K562 (cell line): ENCODE measurements at regions of chr12 and their contacts with region 1.

Region 1: GRCh38 chr12:111248236-111249017 is 120.5 kb downstream of the PHETA1 start:
- DNase-seq: peak in 1 of 4 experiments; percentile 14
- ATAC-seq: 0 out of 3 replicates have a peak, but pooled peaks have one; percentile 27
- H3K4me3 ChIP-seq: no peak overlapping the region
- H3K27ac ChIP-seq: no peak overlapping the region
- H3K4me1 ChIP-seq: no peaks in the 10 kb centered on the region
- H3K27me3 ChIP-seq: peaks cover 19 to 70% of the 10 kb centered on the region in 2 experiments
- CTCF ChIP-seq: no peak
- EP300 ChIP-seq: no peak
- POLR2A ChIP-seq: no peak
- RAD21 ChIP-seq: no peak

Region 2: DNA sequence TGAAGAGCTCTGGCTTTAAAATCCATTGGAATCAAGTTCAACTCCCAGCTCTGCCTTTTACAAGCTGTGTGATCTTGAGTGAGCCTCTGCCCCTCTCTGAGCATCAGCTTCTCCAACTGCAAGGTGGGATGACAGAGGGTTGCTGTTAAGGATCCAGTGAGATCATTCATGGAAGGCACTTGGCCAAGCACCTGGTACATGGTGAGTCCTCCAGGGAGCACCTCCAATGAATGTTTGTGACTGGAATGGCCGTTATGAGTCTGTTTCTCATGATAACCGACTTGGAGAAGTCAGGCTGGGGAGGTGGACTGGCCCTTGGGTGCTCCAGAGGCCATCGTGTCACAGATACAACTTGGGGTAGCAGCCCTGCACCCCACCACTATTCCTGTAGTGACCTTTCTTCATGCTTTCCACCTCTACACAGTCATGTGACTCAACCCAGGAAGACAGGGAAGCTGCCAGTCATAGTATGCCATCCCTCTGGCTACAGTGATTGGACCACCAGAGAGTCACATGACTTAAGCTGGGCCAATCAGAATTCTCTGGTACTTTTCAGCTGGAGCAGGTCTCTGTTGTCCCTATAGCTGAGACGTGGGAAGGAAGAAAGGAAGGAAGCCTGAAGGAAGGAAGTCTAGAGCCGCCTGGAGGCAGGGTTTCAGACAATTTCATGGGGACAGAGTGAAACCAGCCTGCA is 181.5 kb before region 1 on chr12:
- CTCF ChIA-PET with region 1: no interaction called
- POLR2A ChIA-PET with region 1: no interaction called
- in situ Hi-C with region 1: no loop called
- intact Hi-C with region 1: loop called (anchors 10 kb)
- DNase-seq: peak; percentile 28 to 71 (median 64)
- ATAC-seq: peak; percentile 82
- H3K4me3 ChIP-seq: no peak overlapping the region
- H3K27ac ChIP-seq: no peak overlapping the region
- H3K4me1 ChIP-seq: no peaks in the 10 kb centered on the region
- H3K27me3 ChIP-seq: peaks cover 12 to 40% of the 10 kb centered on the region in 2 experiments
- CTCF ChIP-seq: no peak
- EP300 ChIP-seq: no peak
- POLR2A ChIP-seq: no peak
- RAD21 ChIP-seq: no peak